ENCODE measurements at regions of chr3 and their contacts with region 1.

Region 1: GRCh38 chr3:172673210-172673679 is 37.6 kb downstream of the NCEH1 start:
- DNase-seq: peak; percentile 66
- ATAC-seq: peak; percentile 97
- H3K4me3 ChIP-seq: no peak overlapping the region
- H3K27ac ChIP-seq: no peak overlapping the region
- H3K4me1 ChIP-seq: peaks cover 0 to 12% of the 10 kb centered on the region in 2 experiments; a peak in 3 of 4 replicates
- H3K27me3 ChIP-seq: no peaks in the 10 kb centered on the region
- CTCF ChIP-seq: peak; percentile 81 to 90 (median 83)
- POLR2A ChIP-seq: no peak
- RAD21 ChIP-seq: peak; percentile 89

Region 2: GRCh38 chr3:172658344-172659245 is 14.7 kb before region 1 on chr3:
- CTCF ChIA-PET with region 1: interaction called, 12 read pairs
- POLR2A ChIA-PET with region 1: no interaction called
- RAD21 ChIA-PET with region 1: no interaction called
- intact Hi-C with region 1: no loop called
- DNase-seq: peak; percentile 94
- ATAC-seq: peak; percentile 94
- H3K4me3 ChIP-seq: peak overlapping the region in 1 of 2 experiments; percentile 39; a peak in 2 of 4 replicates
- H3K27ac ChIP-seq: peak overlapping the region; percentile 77
- H3K4me1 ChIP-seq: peaks cover 23 to 35% of the 10 kb centered on the region in 2 experiments
- H3K27me3 ChIP-seq: no peaks in the 10 kb centered on the region
- CTCF ChIP-seq: no peak
- POLR2A ChIP-seq: no peak
- RAD21 ChIP-seq: no peak

Region 3: DNA sequence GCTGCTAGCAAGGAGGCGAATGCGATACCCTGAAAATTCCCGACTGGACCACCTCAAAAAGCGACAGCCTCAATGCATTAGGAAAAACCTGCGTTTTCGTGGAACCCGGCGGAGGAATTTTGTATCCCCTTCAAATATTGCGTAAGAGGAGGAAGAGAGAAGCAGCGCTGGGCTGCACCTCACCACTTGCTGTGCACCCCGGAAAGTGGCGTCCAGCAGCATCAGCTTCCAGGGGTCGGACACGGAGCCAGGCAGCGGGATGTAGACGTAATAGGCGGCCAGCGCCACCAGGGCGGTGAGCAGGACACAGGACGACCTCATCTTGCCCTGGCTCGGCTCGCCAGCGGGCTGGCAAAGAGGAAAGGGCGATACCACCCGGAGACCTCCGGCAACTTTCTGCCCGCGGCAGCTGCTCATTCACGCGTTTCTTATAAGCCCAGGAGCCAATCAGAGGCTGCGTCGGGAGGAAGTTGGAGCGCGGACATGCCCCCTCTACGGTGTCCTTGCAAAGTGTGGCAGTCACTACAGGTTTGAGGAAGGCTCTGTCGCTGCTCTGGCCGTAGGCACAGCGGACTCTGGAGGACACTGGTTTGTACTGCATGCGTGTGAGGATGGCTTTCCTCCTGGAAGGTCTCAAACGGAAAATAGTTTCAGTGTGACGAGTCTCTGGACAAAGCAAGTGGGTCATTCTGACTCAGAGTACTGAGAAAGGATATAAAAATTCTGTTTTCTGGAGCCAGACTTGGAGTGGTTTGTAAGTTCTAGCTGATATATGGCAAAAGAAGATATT is 37.6 kb after region 1 on chr3 and contains the start of gene NCEH1:
- CTCF ChIA-PET with region 1: interaction called, 15 read pairs
- POLR2A ChIA-PET with region 1: no interaction called
- RAD21 ChIA-PET with region 1: no interaction called
- intact Hi-C with region 1: loop called (anchors 2 kb)
- DNase-seq: peak; percentile 98
- ATAC-seq: peak; percentile 97
- H3K4me3 ChIP-seq: peak within 1 kb of the TSS; percentile 62 to 91
- H3K27ac ChIP-seq: peak within 1 kb of the TSS; percentile 92
- H3K4me1 ChIP-seq: peaks cover 15 to 27% of the 10 kb centered on the region in 2 experiments
- H3K27me3 ChIP-seq: no peaks in the 10 kb centered on the region
- CTCF ChIP-seq: peak; percentile 79 to 87 (median 87); a peak in 5 of 6 replicates
- POLR2A ChIP-seq: peak; percentile 83
- RAD21 ChIP-seq: peak; percentile 86
- total RNA-seq, gene NCEH1: 11.5 TPM

Region 4: DNA sequence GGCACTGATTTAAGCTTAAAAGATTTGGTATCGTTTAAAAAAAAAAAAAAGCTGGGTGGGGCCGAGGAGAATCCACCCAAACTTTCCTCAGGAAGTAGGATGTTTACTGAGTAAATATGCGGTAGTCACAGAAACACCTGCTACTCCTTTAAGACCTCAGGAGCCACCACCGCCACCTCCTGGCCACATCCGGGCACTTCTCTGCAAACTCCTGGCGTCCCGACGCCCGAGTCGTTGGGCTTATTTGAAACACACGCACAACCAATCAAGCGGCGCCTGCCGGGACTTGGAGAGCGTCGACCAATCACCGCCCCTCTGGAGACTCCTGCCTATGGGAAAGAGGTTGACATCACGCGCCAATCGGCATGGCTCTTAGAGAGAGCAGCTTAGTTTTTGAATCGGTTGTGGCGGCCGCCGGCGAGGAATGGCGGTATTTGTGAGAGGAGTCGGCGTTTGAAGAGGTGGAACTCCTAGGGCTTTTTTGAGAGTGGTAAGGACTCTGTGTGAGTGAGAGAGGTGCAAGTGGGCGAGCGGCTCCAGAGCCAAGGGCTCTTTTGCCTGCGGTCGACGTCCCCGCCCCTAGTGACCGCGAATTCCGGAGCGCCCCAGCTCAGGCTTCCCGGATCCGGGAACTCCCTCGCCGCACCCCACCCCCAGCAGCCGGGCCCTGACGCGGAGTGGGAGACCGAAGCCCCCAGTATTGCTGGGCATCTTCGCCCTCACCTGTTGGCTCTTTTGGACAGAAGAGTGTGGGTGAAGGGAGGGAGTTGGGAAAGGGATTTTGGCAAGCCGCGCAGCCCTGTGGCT is 77.3 kb after region 1 on chr3 and contains the start of gene ECT2:
- CTCF ChIA-PET with region 1: interaction called, 11 read pairs
- POLR2A ChIA-PET with region 1: interaction called, 4 read pairs
- RAD21 ChIA-PET with region 1: no interaction called
- intact Hi-C with region 1: loop called (anchors 2 kb)
- DNase-seq: peak; percentile 100
- ATAC-seq: peak; percentile 96
- H3K4me3 ChIP-seq: peak within 1 kb of the TSS; percentile 83 to 92
- H3K27ac ChIP-seq: peak within 1 kb of the TSS; percentile 71
- H3K4me1 ChIP-seq: peaks cover 21 to 49% of the 10 kb centered on the region in 2 experiments
- H3K27me3 ChIP-seq: no peaks in the 10 kb centered on the region
- CTCF ChIP-seq: peak; percentile 46 to 64 (median 62); a peak in 5 of 6 replicates
- POLR2A ChIP-seq: no peak
- RAD21 ChIP-seq: peak; percentile 52
- total RNA-seq, gene ECT2: 95.6 TPM

Region 5: GRCh38 chr3:174116421-174116820 is 1443.2 kb after region 1 on chr3:
- CTCF ChIA-PET with region 1: no interaction called
- POLR2A ChIA-PET with region 1: no interaction called
- RAD21 ChIA-PET with region 1: no interaction called
- intact Hi-C with region 1: no loop called
- DNase-seq: no peak
- ATAC-seq: no peak
- H3K4me3 ChIP-seq: no peak overlapping the region
- H3K27ac ChIP-seq: no peak overlapping the region
- H3K4me1 ChIP-seq: no peaks in the 10 kb centered on the region
- H3K27me3 ChIP-seq: no peaks in the 10 kb centered on the region
- CTCF ChIP-seq: no peak
- POLR2A ChIP-seq: no peak
- RAD21 ChIP-seq: no peak

Region 6: GRCh38 chr3:174598885-174599439 is 1925.7 kb after region 1 on chr3:
- CTCF ChIA-PET with region 1: no interaction called
- POLR2A ChIA-PET with region 1: no interaction called
- RAD21 ChIA-PET with region 1: no interaction called
- intact Hi-C with region 1: no loop called
- DNase-seq: no peak
- ATAC-seq: no peak
- H3K4me3 ChIP-seq: no peak overlapping the region
- H3K27ac ChIP-seq: no peak overlapping the region
- H3K4me1 ChIP-seq: no peaks in the 10 kb centered on the region
- H3K27me3 ChIP-seq: no peaks in the 10 kb centered on the region
- CTCF ChIP-seq: no peak
- POLR2A ChIP-seq: no peak
- RAD21 ChIP-seq: no peak

Measured in HCT116 (cell line).